ENCODE measurements at regions of chr15 and their contacts with region 1.

Region 1: DNA sequence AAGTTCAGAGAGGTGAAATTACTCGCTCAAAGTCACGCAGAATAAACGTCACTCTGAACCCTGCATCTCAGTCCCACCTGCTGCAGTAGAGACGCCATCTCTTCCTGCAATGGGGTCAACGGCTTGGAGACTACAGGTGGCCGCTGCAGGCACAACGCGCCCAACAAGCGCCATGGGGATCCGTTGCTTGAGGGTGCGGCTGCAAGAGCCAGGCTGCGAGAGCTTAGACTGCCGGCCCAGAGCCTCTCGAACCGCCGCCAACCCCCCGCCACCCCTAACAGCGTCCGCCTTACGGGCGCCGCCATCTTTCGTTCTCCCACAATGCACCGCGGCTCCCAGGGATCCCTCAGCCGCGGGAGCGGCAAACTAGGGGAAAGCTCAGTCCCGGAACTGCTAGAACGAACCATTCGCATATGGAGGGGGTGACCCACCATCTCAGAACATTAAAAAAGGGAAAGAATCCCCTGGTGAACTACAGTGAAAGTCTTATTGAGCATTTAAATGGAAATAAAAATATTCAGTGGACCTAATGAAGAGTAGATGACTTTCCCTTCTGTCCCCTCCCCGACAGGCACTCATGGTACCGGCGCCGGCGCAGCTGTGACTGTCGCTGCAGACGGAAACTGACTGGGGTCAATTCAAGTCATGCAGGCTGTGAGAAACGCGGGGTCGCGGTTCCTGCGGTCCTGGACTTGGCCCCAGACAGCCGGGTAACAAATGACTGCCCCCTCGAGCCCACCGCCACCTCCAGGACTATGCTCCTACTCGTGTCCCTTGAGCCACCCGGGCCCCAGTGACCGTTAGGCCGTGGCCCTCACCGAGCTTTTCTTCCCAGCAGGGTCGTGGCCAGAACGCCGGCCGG is at the starts of genes MRPL46 and MRPS11:
- DNase-seq: peak; percentile 81 to 94 (median 89)
- ATAC-seq: peak; percentile 91
- H3K4me3 ChIP-seq: peak within 1 kb of the TSS; percentile 57 to 92
- H3K4me3 Mint-ChIP-seq: peak within 1 kb of the TSS; percentile 98
- H3K27ac ChIP-seq: peak within 1 kb of the TSS; percentile 90 to 98
- H3K27ac Mint-ChIP-seq: peak within 1 kb of the TSS; percentile 99
- H3K4me1 ChIP-seq: peaks cover 17% of the 10 kb centered on the region
- H3K4me1 Mint-ChIP-seq: peaks cover 27% of the 10 kb centered on the region
- H3K27me3 ChIP-seq: no peaks in the 10 kb centered on the region
- H3K27me3 Mint-ChIP-seq: no peaks in the 10 kb centered on the region
- CTCF ChIP-seq: no peak
- total RNA-seq, gene MRPL46: 11.8 to 12.6 TPM
- total RNA-seq, gene MRPS11: 7.4 to 9.6 TPM

Region 2: DNA sequence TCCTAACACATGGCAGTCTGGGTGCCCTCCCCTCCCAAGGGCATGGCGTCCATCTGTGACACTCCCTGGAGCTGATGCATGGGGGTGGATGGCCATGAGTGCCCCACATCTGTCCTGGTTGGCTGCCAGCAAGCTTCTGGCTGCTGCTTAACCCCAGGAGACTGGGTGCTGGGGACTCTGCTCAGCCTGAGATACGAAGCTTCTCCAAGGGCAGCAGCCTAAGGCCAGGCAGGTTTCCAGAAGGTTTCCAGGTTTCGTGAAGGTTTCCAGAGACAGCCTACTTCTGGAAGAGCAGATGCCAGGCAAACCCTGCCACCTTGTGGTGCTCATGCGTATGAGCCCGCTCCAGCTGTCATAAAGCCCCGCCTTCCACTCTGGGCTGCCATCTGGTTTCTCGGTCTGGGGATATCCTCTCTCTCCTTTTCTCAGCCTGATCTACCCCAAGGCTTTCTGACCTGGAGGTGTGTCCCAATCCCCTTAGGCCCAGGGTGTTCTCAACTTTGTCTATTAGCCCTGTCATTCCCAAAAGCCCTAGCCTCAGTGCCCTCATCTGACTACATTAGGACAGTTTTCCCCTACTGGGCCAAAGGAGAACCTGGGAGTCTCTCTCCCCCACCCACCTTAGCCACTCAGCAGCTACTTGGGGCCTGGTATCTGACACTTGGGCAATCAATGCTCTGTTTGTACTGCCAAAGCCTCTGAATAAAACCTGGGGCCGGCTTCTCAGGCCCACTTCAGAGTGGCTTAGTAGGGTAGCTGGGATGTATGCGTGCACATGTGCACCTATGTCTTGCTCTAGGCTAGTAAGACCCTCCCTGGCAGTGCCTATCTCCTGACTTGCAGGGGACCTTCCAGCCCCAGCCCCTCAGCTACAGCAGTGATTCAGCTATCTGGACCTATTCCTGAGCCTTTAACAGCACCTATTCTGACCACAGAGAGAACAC is 12.2 kb before region 1 on chr15:
- CTCF ChIA-PET with region 1: interaction called, 16 read pairs
- POLR2A ChIA-PET with region 1: interaction called, 3 read pairs
- intact Hi-C with region 1: no loop called
- DNase-seq: peak in 4 of 9 experiments; percentile 27 to 61 (median 40)
- ATAC-seq: peak; percentile 88
- H3K4me3 ChIP-seq: no peak overlapping the region
- H3K4me3 Mint-ChIP-seq: no peak overlapping the region
- H3K27ac ChIP-seq: no peak overlapping the region
- H3K27ac Mint-ChIP-seq: no peak overlapping the region
- H3K4me1 ChIP-seq: peaks cover under 1% of the 10 kb centered on the region
- H3K4me1 Mint-ChIP-seq: peaks cover 7% of the 10 kb centered on the region
- H3K27me3 ChIP-seq: no peaks in the 10 kb centered on the region
- H3K27me3 Mint-ChIP-seq: peaks cover under 1% of the 10 kb centered on the region
- CTCF ChIP-seq: peak; percentile 60

Region 3: GRCh38 chr15:88509964-88510363 is 42.7 kb after region 1 on chr15:
- CTCF ChIA-PET with region 1: no interaction called
- POLR2A ChIA-PET with region 1: no interaction called
- intact Hi-C with region 1: no loop called
- DNase-seq: no peak
- ATAC-seq: no peak
- H3K4me3 ChIP-seq: no peak overlapping the region
- H3K4me3 Mint-ChIP-seq: no peak overlapping the region
- H3K27ac ChIP-seq: no peak overlapping the region
- H3K27ac Mint-ChIP-seq: no peak overlapping the region
- H3K4me1 ChIP-seq: no peaks in the 10 kb centered on the region
- H3K4me1 Mint-ChIP-seq: no peaks in the 10 kb centered on the region
- H3K27me3 ChIP-seq: no peaks in the 10 kb centered on the region
- H3K27me3 Mint-ChIP-seq: no peaks in the 10 kb centered on the region
- CTCF ChIP-seq: no peak

Region 4: GRCh38 chr15:88546248-88547129 is 79.2 kb after region 1 on chr15 and contains the start of gene DET1:
- CTCF ChIA-PET with region 1: no interaction called
- POLR2A ChIA-PET with region 1: interaction called, 3 read pairs
- intact Hi-C with region 1: loop called (anchors 1 kb)
- DNase-seq: peak; percentile 87 to 98 (median 94)
- ATAC-seq: peak; percentile 91
- H3K4me3 ChIP-seq: peak within 1 kb of the TSS; percentile 60 to 62
- H3K4me3 Mint-ChIP-seq: peak within 1 kb of the TSS; percentile 91
- H3K27ac ChIP-seq: peak within 1 kb of the TSS; percentile 72 to 80
- H3K27ac Mint-ChIP-seq: peak within 1 kb of the TSS; percentile 96
- H3K4me1 ChIP-seq: peaks cover 6% of the 10 kb centered on the region
- H3K4me1 Mint-ChIP-seq: peaks cover 18% of the 10 kb centered on the region
- H3K27me3 ChIP-seq: no peaks in the 10 kb centered on the region
- H3K27me3 Mint-ChIP-seq: no peaks in the 10 kb centered on the region
- CTCF ChIP-seq: peak; percentile 70
- total RNA-seq, gene DET1: 1.4 to 2.0 TPM

Region 5: DNA sequence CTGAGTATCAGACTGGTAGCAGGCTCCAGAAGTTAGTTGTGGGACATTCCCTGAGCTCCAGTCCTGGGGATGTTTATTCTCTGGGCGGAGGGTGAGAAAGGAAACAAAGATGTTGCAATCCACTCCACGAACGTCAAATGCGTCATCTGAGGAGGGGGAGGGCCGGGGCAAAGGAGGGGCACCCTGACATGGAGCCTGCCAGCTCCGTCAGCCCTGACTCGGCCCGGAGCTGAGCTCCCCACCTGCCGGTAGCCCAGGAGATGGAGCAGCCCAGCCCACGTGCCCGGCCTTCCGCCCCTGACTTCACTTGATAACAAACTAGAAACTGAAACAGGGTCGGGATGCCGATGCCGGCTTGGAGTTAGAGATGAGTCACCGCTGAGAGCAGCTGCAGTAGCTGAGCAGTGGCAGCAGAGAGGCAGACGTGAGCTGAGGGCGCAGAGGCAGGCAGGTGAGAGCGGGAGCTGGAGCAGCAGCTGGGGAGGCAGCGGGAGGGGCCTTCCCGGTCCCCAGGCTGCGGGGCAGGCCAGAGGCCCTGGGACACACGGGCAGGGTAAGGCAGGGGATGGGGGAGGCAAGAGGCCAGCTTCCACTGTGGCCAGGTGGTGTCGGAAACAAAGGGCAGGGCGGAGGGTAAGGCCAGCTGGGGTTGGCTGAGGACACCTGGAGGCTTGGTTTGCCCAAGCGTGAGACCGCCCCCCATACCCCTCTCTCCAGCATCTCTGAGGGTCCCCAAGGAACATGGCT is 171.5 kb after region 1 on chr15 and contains the start of gene ISG20:
- CTCF ChIA-PET with region 1: interaction called, 4 read pairs
- POLR2A ChIA-PET with region 1: interaction called, 14 read pairs
- intact Hi-C with region 1: loop called in 1 of 2 experiments (anchors 1 kb)
- DNase-seq: peak; percentile 88 to 100 (median 96)
- ATAC-seq: peak; percentile 80
- H3K4me3 ChIP-seq: peak within 1 kb of the TSS; percentile 67 to 76
- H3K4me3 Mint-ChIP-seq: peak within 1 kb of the TSS; percentile 88
- H3K27ac ChIP-seq: peak within 1 kb of the TSS; percentile 97
- H3K27ac Mint-ChIP-seq: peak within 1 kb of the TSS; percentile 97
- H3K4me1 ChIP-seq: peaks cover 88% of the 10 kb centered on the region
- H3K4me1 Mint-ChIP-seq: peaks cover 77% of the 10 kb centered on the region
- H3K27me3 ChIP-seq: no peaks in the 10 kb centered on the region
- H3K27me3 Mint-ChIP-seq: no peaks in the 10 kb centered on the region
- CTCF ChIP-seq: peak; percentile 63
- total RNA-seq, gene ISG20: 89.2 to 93.4 TPM

Region 6: GRCh38 chr15:88664151-88664778 is 197.0 kb after region 1 on chr15:
- CTCF ChIA-PET with region 1: interaction called, 12 read pairs
- POLR2A ChIA-PET with region 1: no interaction called
- intact Hi-C with region 1: loop called in 1 of 2 experiments (anchors 1 kb)
- DNase-seq: peak in 7 of 9 experiments; percentile 29 to 80 (median 66)
- ATAC-seq: peak; percentile 91
- H3K4me3 ChIP-seq: no peak overlapping the region
- H3K4me3 Mint-ChIP-seq: no peak overlapping the region
- H3K27ac ChIP-seq: no peak overlapping the region
- H3K27ac Mint-ChIP-seq: peak overlapping the region; percentile 15
- H3K4me1 ChIP-seq: peaks cover 35% of the 10 kb centered on the region
- H3K4me1 Mint-ChIP-seq: peaks cover 32% of the 10 kb centered on the region
- H3K27me3 ChIP-seq: no peaks in the 10 kb centered on the region
- H3K27me3 Mint-ChIP-seq: peaks cover 6% of the 10 kb centered on the region
- CTCF ChIP-seq: peak; percentile 63

Region 7: GRCh38 chr15:88725305-88726210 is 258.3 kb after region 1 on chr15:
- CTCF ChIA-PET with region 1: no interaction called
- POLR2A ChIA-PET with region 1: no interaction called
- intact Hi-C with region 1: no loop called
- DNase-seq: no peak
- ATAC-seq: no peak
- H3K4me3 ChIP-seq: no peak overlapping the region
- H3K4me3 Mint-ChIP-seq: no peak overlapping the region
- H3K27ac ChIP-seq: no peak overlapping the region
- H3K27ac Mint-ChIP-seq: no peak overlapping the region
- H3K4me1 ChIP-seq: no peaks in the 10 kb centered on the region
- H3K4me1 Mint-ChIP-seq: no peaks in the 10 kb centered on the region
- H3K27me3 ChIP-seq: no peaks in the 10 kb centered on the region
- H3K27me3 Mint-ChIP-seq: peaks cover 11% of the 10 kb centered on the region
- CTCF ChIP-seq: no peak

Region 8: DNA sequence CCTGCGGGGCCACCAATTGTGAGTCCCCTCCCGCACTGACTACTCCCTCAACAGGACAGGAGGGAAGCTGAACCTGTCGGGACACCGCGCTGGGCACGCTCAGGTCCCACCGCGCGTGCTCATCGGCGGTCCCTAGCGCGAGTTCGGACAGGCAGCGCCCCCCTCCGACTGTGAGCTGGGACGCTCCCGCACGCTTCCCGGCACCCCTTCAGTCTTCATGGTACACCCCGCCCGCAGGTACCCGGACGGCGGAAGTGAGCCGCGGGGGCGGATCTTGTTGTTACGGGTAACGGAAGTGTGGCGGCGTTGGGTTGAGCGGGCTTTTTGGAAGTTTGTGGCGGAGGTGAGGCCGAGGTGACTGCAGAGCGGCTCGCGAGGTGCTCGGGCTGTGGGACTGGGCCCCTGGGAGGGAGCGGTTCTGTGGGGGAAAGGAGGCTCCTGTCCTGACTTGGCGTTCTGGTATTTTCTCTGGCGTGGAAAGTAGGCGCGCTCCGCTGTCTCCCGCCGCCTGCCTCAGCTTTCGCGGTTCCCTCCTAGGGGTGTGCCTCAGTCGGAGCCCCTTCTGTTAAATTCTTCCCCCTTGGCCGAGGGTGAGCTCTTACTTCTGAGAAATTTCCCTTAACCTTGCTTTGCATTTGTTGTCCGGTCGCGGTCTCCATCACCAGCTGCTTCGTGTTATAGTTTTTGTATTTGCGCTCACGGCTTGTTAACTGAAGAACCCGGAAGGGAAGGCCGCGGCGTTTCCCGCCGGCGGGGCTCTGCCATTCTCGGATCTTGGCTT is 776.6 kb after region 1 on chr15 and contains the start of gene FANCI:
- CTCF ChIA-PET with region 1: no interaction called
- POLR2A ChIA-PET with region 1: no interaction called
- intact Hi-C with region 1: loop called in 1 of 2 experiments (anchors 1 kb)
- DNase-seq: peak; percentile 93 to 98 (median 97)
- ATAC-seq: peak; percentile 98
- H3K4me3 ChIP-seq: peak within 1 kb of the TSS; percentile 77 to 85
- H3K4me3 Mint-ChIP-seq: peak within 1 kb of the TSS; percentile 95
- H3K27ac ChIP-seq: peak within 1 kb of the TSS; percentile 24 to 52
- H3K27ac Mint-ChIP-seq: peak within 1 kb of the TSS; percentile 90
- H3K4me1 ChIP-seq: peaks cover 15% of the 10 kb centered on the region
- H3K4me1 Mint-ChIP-seq: peaks cover 25% of the 10 kb centered on the region
- H3K27me3 ChIP-seq: no peaks in the 10 kb centered on the region
- H3K27me3 Mint-ChIP-seq: no peaks in the 10 kb centered on the region
- CTCF ChIP-seq: no peak
- total RNA-seq, gene FANCI: 5.1 to 6.3 TPM

Region 9: GRCh38 chr15:89575146-89575655 is 1107.9 kb after region 1 on chr15 and contains the start of gene TICRR:
- CTCF ChIA-PET with region 1: no interaction called
- POLR2A ChIA-PET with region 1: no interaction called
- intact Hi-C with region 1: loop called in 1 of 2 experiments (anchors 10 kb)
- DNase-seq: peak; percentile 88 to 99 (median 92)
- ATAC-seq: peak; percentile 98
- H3K4me3 ChIP-seq: peak within 1 kb of the TSS; percentile 58 to 86
- H3K4me3 Mint-ChIP-seq: peak within 1 kb of the TSS; percentile 82
- H3K27ac ChIP-seq: no peak within 1 kb of the TSS
- H3K27ac Mint-ChIP-seq: peak within 1 kb of the TSS; percentile 13
- H3K4me1 ChIP-seq: peaks cover 6% of the 10 kb centered on the region
- H3K4me1 Mint-ChIP-seq: peaks cover 11% of the 10 kb centered on the region
- H3K27me3 ChIP-seq: no peaks in the 10 kb centered on the region
- H3K27me3 Mint-ChIP-seq: peaks cover 11% of the 10 kb centered on the region
- CTCF ChIP-seq: no peak
- total RNA-seq, gene TICRR: 0.11 TPM in 1 of 2 experiments, not detected in the other